MCF 10A (cell line): ENCODE measurements at regions of chr3 and their contacts with region 1.

Region 1: GRCh38 chr3:58433400-58434169 is at the start of gene PDHB:
- DNase-seq: peak; percentile 87
- H3K4me3 Mint-ChIP-seq: peak within 1 kb of the TSS; percentile 93
- H3K27ac Mint-ChIP-seq: peak within 1 kb of the TSS; percentile 40
- H3K4me1 Mint-ChIP-seq: peaks cover 21% of the 10 kb centered on the region
- H3K27me3 Mint-ChIP-seq: no peaks in the 10 kb centered on the region
- CTCF ChIP-seq: no peak
- total RNA-seq, gene PDHB: 52.2 and 62.2 TPM in 2 replicates

Region 2: DNA sequence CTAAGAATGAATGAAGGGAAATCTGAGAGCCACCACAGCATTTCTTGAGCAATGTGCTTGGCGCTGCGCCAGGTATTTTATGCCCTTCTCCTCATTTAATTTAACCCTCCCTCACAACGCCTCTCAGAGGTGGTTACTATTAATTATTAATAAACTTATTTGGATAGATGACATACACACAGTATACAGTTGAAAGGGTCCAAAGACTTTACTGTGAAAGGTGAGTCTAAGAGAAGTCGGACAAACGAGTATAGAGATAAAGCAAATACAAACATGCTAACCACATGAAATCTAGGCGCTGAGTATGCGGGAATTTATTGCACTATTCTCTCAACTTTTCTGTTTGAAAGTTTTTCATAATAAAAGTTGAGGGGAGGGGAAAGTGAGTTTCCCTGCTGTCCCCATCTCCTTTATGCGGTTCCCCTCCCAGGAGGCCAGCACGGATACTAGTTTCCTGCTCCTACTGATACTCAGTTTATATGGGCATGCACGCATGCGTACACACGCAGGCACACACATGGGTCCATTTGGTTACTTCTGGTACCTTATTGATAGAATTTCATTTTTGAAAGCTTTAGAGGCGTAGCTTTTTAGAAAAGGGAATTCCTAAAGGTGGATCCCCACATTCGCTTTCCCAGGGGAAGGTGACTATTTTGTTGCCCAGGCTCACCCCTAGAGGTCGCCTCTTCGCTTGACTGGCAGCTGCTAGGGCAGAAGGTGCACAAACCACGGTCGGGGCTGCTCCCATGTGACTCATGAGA is 29.8 kb after region 1 on chr3:
- CTCF ChIA-PET with region 1: interaction called, 10 read pairs
- POLR2A ChIA-PET with region 1: interaction called, 6 read pairs
- intact Hi-C with region 1: no loop called
- DNase-seq: peak; percentile 95
- H3K4me3 Mint-ChIP-seq: no peak overlapping the region
- H3K27ac Mint-ChIP-seq: peak overlapping the region; percentile 71
- H3K4me1 Mint-ChIP-seq: peaks cover 20% of the 10 kb centered on the region
- H3K27me3 Mint-ChIP-seq: no peaks in the 10 kb centered on the region
- CTCF ChIP-seq: peak; percentile 89

Region 3: DNA sequence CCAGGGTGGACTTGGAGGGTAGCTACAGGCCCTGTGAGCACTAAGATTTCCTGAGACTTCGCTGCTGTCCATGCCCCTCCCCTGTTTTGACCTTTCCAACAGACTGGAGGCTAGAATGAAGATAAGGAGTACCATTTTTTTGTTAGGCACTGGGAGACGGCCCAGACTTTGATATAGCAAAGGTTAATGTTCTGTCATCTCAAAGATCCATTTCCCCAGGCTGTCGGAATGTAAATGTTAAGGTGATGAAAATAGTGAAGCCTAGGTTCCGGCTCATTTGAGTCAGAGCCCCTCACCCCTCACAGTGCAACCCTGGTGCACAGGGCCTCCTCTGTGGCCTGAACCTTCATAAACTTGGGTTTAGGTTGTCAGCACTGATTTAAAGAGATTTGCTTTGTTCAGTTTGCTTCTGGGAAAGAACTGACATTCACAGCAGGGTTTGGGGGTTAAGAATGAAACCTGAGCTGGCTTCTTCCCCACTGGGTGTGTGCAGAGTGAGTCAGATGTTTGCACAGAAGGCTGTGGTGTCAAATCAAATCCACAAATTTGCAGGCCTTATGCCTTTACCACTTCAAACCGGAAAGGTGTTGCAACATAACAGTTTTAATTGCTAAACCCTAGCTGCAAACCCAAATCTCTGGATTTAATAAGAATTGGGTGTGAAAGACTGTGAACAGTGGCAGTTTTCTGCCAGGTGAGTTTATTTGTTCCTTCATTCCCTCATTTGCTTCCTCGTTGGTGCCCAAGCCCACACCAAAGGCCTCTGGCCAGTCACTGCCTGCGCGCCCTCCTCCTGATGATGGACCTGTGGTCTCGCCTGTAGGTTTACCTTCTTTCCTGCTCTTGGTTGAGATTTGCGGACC is 37.7 kb after region 1 on chr3:
- CTCF ChIA-PET with region 1: interaction called, 8 read pairs
- POLR2A ChIA-PET with region 1: interaction called, 12 read pairs
- intact Hi-C with region 1: no loop called
- DNase-seq: peak; percentile 98
- H3K4me3 Mint-ChIP-seq: peak overlapping the region; percentile 30
- H3K27ac Mint-ChIP-seq: peak overlapping the region; percentile 82
- H3K4me1 Mint-ChIP-seq: peaks cover 13% of the 10 kb centered on the region
- H3K27me3 Mint-ChIP-seq: no peaks in the 10 kb centered on the region
- CTCF ChIP-seq: no peak